CD8-positive, alpha-beta T cell (primary cell): ENCODE measurements at regions of chr9 and their contacts with region 1.

Region 1: DNA sequence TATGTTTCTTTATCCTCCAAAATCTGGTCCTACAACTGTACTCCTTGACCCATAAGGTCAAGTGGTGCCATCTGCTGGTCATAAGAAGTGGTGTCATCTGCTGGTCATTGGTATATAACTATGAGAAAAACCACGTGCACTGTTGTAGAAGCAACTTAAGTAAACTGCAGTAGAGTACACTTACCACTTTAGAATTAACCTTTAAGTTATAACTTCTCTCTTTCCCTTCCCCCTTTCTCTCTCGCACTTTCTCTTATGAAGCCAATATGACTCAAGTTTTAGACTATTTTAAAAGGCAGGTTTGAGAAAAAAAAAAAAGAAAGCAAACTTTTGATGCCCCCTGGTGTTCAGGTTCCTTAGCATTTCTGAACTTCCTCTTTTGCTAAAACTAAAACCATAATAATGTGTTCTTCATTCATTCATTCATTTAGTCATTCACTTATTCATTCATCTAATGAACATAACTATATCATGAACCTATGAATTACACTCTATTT is 12.8 kb upstream of the MTAP start:
- DNase-seq: peak in 6 of 9 experiments; percentile 46 to 89 (median 62)
- ATAC-seq: peak; percentile 94
- H3K4me3 ChIP-seq: peak overlapping the region; percentile 18 to 33
- H3K4me3 Mint-ChIP-seq: peak overlapping the region; percentile 80
- H3K27ac ChIP-seq: no peak overlapping the region
- H3K27ac Mint-ChIP-seq: peak overlapping the region; percentile 71
- H3K4me1 ChIP-seq: no peaks in the 10 kb centered on the region
- H3K4me1 Mint-ChIP-seq: no peaks in the 10 kb centered on the region
- H3K27me3 ChIP-seq: no peaks in the 10 kb centered on the region
- H3K27me3 Mint-ChIP-seq: peaks cover 8% of the 10 kb centered on the region
- CTCF ChIP-seq: peak; percentile 86

Region 2: GRCh38 chr9:21239911-21240310 is 549.7 kb before region 1 on chr9 and contains the start of gene IFNA14:
- CTCF ChIA-PET with region 1: interaction called, 5 read pairs
- POLR2A ChIA-PET with region 1: no interaction called
- intact Hi-C with region 1: loop called (anchors 1 to 5 kb)
- DNase-seq: no peak
- ATAC-seq: no peak
- H3K4me3 ChIP-seq: no peak within 1 kb of the TSS
- H3K4me3 Mint-ChIP-seq: no peak within 1 kb of the TSS
- H3K27ac ChIP-seq: no peak within 1 kb of the TSS
- H3K27ac Mint-ChIP-seq: no peak within 1 kb of the TSS
- H3K4me1 ChIP-seq: no peaks in the 10 kb centered on the region
- H3K4me1 Mint-ChIP-seq: peaks cover 9% of the 10 kb centered on the region
- H3K27me3 ChIP-seq: no peaks in the 10 kb centered on the region
- H3K27me3 Mint-ChIP-seq: peaks cover 16% of the 10 kb centered on the region
- CTCF ChIP-seq: no peak
- total RNA-seq, gene IFNA14: not detected

Region 3: GRCh38 chr9:21326526-21327139 is 463.0 kb before region 1 on chr9:
- CTCF ChIA-PET with region 1: interaction called, 6 read pairs
- POLR2A ChIA-PET with region 1: no interaction called
- intact Hi-C with region 1: loop called (anchors 1 kb)
- DNase-seq: peak in 2 of 9 experiments; percentile 63 to 75
- ATAC-seq: peak; percentile 90
- H3K4me3 ChIP-seq: no peak overlapping the region
- H3K4me3 Mint-ChIP-seq: no peak overlapping the region
- H3K27ac ChIP-seq: no peak overlapping the region
- H3K27ac Mint-ChIP-seq: peak overlapping the region; percentile 12
- H3K4me1 ChIP-seq: peaks cover 30% of the 10 kb centered on the region
- H3K4me1 Mint-ChIP-seq: peaks cover 49% of the 10 kb centered on the region
- H3K27me3 ChIP-seq: no peaks in the 10 kb centered on the region
- H3K27me3 Mint-ChIP-seq: no peaks in the 10 kb centered on the region
- CTCF ChIP-seq: peak; percentile 87

Region 4: GRCh38 chr9:21465859-21466518 is 323.6 kb before region 1 on chr9:
- CTCF ChIA-PET with region 1: interaction called, 47 read pairs
- POLR2A ChIA-PET with region 1: no interaction called
- intact Hi-C with region 1: loop called (anchors 1 kb)
- DNase-seq: peak in 2 of 9 experiments; percentile 68 to 75
- ATAC-seq: peak; percentile 77
- H3K4me3 ChIP-seq: no peak overlapping the region
- H3K4me3 Mint-ChIP-seq: no peak overlapping the region
- H3K27ac ChIP-seq: no peak overlapping the region
- H3K27ac Mint-ChIP-seq: no peak overlapping the region
- H3K4me1 ChIP-seq: no peaks in the 10 kb centered on the region
- H3K4me1 Mint-ChIP-seq: peaks cover 2% of the 10 kb centered on the region
- H3K27me3 ChIP-seq: no peaks in the 10 kb centered on the region
- H3K27me3 Mint-ChIP-seq: no peaks in the 10 kb centered on the region
- CTCF ChIP-seq: peak; percentile 71

Region 5: GRCh38 chr9:21491742-21492141 is 297.8 kb before region 1 on chr9:
- CTCF ChIA-PET with region 1: interaction called, 6 read pairs
- POLR2A ChIA-PET with region 1: no interaction called
- intact Hi-C with region 1: loop called in 1 of 2 experiments (anchors 1 kb)
- DNase-seq: peak in 2 of 9 experiments; percentile 13 to 22
- ATAC-seq: no peak
- H3K4me3 ChIP-seq: no peak overlapping the region
- H3K4me3 Mint-ChIP-seq: no peak overlapping the region
- H3K27ac ChIP-seq: no peak overlapping the region
- H3K27ac Mint-ChIP-seq: no peak overlapping the region
- H3K4me1 ChIP-seq: no peaks in the 10 kb centered on the region
- H3K4me1 Mint-ChIP-seq: peaks cover 8% of the 10 kb centered on the region
- H3K27me3 ChIP-seq: no peaks in the 10 kb centered on the region
- H3K27me3 Mint-ChIP-seq: peaks cover 2% of the 10 kb centered on the region
- CTCF ChIP-seq: no peak

Region 6: DNA sequence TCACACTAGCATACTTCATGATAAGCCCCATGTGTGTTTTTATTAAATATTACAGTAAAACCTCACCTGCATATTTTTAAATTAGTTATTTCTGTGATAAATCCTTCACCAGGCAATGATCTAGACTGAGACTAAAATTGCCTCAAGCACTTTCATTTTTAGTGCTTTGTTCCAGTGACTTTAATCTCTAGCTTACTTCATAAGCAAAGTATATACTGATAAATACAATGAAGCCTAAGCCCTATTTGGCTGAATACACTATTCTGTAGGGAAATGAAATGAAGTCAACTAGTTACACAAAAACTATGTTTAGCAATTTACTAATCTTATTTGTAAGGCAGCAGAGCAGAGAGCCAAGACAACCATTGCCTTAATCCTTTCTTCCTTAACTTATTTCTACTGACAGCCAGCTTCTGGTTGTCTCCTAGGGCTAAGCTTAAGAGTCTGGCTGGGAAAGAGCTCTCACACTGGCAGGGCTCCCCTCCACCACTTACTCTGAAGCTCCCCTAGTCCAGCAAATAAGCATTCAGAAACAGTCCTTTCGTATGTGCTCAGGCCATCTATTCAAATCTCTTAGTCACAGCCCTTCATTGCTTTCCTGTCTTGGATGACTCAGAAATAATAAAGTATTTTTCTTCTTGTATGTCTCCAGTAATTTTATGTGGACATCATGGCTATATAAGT is 18.6 kb before region 1 on chr9:
- CTCF ChIA-PET with region 1: interaction called, 11 read pairs
- POLR2A ChIA-PET with region 1: no interaction called
- intact Hi-C with region 1: no loop called
- DNase-seq: no peak
- ATAC-seq: no peak
- H3K4me3 ChIP-seq: no peak overlapping the region
- H3K4me3 Mint-ChIP-seq: no peak overlapping the region
- H3K27ac ChIP-seq: no peak overlapping the region
- H3K27ac Mint-ChIP-seq: no peak overlapping the region
- H3K4me1 ChIP-seq: peaks cover 3% of the 10 kb centered on the region
- H3K4me1 Mint-ChIP-seq: peaks cover 11% of the 10 kb centered on the region
- H3K27me3 ChIP-seq: no peaks in the 10 kb centered on the region
- H3K27me3 Mint-ChIP-seq: no peaks in the 10 kb centered on the region
- CTCF ChIP-seq: no peak

Region 7: DNA sequence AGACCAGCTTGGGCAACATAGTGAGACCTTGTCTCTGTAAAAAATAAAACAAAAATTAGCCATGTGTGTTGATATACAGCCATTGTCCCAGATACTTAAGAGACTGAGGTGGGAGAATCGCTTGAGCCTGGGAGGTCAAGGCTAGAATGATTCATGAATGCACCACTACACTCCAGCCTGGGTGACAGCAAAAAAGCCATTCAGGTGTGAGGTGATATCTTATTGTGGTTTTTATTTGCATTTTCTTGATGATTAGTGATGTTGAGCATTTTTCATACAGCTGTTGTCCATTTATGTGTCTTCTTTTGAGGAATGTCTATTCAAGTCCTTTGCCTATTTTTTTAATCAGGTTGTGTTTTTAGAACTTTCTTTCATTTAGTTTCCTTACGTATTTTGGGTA is 36.0 kb after region 1 on chr9:
- CTCF ChIA-PET with region 1: no interaction called
- POLR2A ChIA-PET with region 1: no interaction called
- intact Hi-C with region 1: no loop called
- DNase-seq: no peak
- ATAC-seq: no peak
- H3K4me3 ChIP-seq: no peak overlapping the region
- H3K4me3 Mint-ChIP-seq: no peak overlapping the region
- H3K27ac ChIP-seq: no peak overlapping the region
- H3K27ac Mint-ChIP-seq: no peak overlapping the region
- H3K4me1 ChIP-seq: no peaks in the 10 kb centered on the region
- H3K4me1 Mint-ChIP-seq: peaks cover 36% of the 10 kb centered on the region
- H3K27me3 ChIP-seq: no peaks in the 10 kb centered on the region
- H3K27me3 Mint-ChIP-seq: no peaks in the 10 kb centered on the region
- CTCF ChIP-seq: no peak